Activated T-helper 2 cell treated with anti-CD3 and anti-CD28 coated beads, Interferon-gamma antibody, Interleukin-2, Interleukin-4, amounts not matched to agents 10 μg/mL and 5 μg/mL and 100 μg/mL, durations not matched to agents 14 hours and 24 hours and 36 hours (primary cell): ENCODE measurements at regions of chr20 and their contacts with region 1.

Region 1: GRCh38 chr20:63309261-63310071 is 16.5 kb downstream of the COL20A1 start:
- DNase-seq: no peak
- H3K4me3 Mint-ChIP-seq: no peak overlapping the region
- H3K27ac Mint-ChIP-seq: no peak overlapping the region
- H3K4me1 Mint-ChIP-seq: no peaks in the 10 kb centered on the region
- H3K27me3 Mint-ChIP-seq: no peaks in the 10 kb centered on the region

Region 2: GRCh38 chr20:63163596-63164455 is 145.6 kb before region 1 on chr20:
- intact Hi-C with region 1: no loop called
- DNase-seq: no peak
- H3K4me3 Mint-ChIP-seq: no peak overlapping the region
- H3K27ac Mint-ChIP-seq: no peak overlapping the region
- H3K4me1 Mint-ChIP-seq: no peaks in the 10 kb centered on the region
- H3K27me3 Mint-ChIP-seq: no peaks in the 10 kb centered on the region

Region 3: DNA sequence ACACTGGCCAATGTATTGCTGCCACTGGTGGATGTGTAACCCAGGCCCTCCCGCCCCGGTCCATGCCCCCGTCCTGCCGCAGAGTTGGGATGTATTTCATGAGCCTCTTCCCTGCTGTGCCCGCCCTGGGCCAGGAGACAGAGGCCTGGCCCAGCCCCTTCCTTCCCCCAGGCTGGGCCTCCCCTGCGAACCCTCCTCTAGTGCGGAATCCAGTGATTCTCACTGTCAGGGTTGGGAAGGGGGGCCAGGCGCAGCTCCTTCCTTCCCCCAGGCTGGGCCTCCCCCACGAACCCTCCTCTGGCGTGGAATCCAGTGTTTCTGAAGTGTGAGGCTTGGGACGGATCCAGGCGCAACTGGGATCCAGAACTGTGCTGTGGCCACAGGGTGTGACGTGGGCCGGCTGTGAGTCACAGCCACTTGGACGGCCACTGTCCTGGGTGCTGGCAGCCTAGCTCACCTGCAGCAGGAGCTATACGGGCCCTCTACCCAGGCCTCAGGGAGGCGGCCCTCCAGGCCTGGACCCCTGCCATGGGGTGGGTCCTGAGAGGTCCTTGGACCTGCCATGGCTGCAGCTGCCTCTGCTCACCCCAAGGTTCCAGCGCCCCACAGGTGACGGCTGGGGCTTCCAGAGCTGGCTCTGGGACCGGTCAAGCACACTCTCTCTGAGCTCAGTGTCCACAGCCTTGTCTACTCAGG is 11.8 kb after region 1 on chr20:
- intact Hi-C with region 1: no loop called
- DNase-seq: no peak
- H3K4me3 Mint-ChIP-seq: no peak overlapping the region
- H3K27ac Mint-ChIP-seq: no peak overlapping the region
- H3K4me1 Mint-ChIP-seq: no peaks in the 10 kb centered on the region
- H3K27me3 Mint-ChIP-seq: peaks cover 7% of the 10 kb centered on the region

Region 4: GRCh38 chr20:63381807-63382322 is 72.4 kb after region 1 on chr20:
- intact Hi-C with region 1: loop called (anchors 5 kb)
- DNase-seq: peak; percentile 20
- H3K4me3 Mint-ChIP-seq: no peak overlapping the region
- H3K27ac Mint-ChIP-seq: no peak overlapping the region
- H3K4me1 Mint-ChIP-seq: no peaks in the 10 kb centered on the region
- H3K27me3 Mint-ChIP-seq: peaks cover 7% of the 10 kb centered on the region